Endothelial cell of umbilical vein (primary cell): ENCODE measurements at regions of chr9 and their contacts with region 1.

Region 1: DNA sequence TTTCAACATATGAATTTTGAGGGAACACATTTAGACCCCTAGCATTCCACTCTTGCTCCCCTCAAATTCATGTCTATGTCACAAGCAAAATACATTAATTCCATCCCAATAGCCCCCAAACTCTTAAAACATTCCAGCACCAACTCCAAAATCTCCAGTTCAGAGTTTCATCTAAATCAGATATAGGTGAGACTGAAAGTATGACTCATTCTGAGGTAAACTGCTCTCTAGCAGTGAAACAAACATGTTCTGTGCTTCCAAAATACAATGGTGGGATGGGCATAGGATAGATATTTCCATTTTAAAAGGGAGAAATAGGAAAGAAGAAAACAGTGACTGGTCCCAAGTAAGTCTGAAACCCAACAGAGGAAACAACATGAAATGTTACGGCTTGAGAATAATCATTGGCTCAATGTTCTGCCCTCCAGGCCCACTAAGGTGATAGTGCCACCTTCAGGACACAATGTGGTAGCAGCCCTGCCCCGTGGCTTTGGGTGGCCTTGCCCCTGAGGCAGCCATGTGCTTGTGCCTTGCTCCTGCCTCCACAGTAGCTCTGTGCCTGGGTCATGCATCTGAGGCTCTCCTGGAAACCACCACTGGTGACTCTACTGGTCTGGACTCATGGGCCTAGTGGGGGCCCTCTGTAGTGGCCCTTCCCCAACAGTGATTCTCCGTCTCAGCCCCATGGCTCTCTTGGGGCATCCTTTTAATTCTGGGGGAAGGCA is 36.4 kb upstream of the IPPK start:
- DNase-seq: peak; percentile 13
- H3K4me3 ChIP-seq: no peak overlapping the region
- H3K27ac ChIP-seq: no peak overlapping the region
- H3K4me1 ChIP-seq: peaks cover 12% of the 10 kb centered on the region
- H3K27me3 ChIP-seq: no peaks in the 10 kb centered on the region
- CTCF ChIP-seq: peak; percentile 42 to 52
- POLR2A ChIP-seq: no peak

Region 2: GRCh38 chr9:92293452-92294296 is 412.7 kb before region 1 on chr9 and contains the start of gene IARS1:
- CTCF ChIA-PET with region 1: no interaction called
- POLR2A ChIA-PET with region 1: no interaction called
- dilution Hi-C with region 1: no loop called
- intact Hi-C with region 1: loop called (anchors 10 kb)
- DNase-seq: peak; percentile 99
- H3K4me3 ChIP-seq: peak within 1 kb of the TSS; percentile 76 to 98 (median 78)
- H3K27ac ChIP-seq: peak within 1 kb of the TSS; percentile 64
- H3K4me1 ChIP-seq: peaks cover 23% of the 10 kb centered on the region
- H3K27me3 ChIP-seq: no peaks in the 10 kb centered on the region
- CTCF ChIP-seq: peak in 1 of 2 donors; percentile 40
- POLR2A ChIP-seq: peak; percentile 97
- total RNA-seq, gene IARS1: 130 and 132 TPM in 2 replicates

Region 3: DNA sequence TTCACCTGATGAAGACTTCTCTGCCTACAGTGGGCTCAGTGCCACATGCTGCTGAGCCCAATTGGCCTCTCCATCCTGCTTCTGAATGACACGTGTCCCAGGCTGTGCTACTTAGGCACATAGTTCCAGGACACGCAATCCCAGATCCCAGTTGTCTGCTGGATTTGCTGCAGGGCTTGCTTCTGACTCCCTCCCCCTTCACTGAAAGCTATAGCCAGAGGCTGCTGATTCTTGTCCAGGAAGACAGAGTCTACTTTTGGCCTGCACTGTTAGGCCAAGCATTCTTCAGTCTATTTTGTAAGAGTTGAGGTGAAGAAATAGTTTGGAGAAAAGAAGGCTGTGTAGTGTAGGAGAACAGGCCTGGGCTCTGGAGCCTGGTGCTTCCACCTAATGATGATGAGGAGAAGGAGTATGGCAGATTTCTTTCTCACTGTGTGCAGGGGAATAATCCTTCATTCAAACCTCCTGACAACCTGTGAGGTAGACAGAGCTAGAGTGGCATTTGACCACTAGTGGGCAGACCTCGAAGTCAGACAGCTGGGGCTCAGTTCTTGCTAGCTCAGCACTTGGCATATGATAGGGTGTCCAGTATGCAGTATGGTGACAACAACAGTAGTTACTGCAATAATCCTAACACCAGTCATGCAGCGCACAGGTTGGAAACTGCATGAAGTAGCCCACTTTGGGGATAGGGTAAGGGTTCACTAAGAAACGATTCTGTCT is 204.5 kb before region 1 on chr9:
- CTCF ChIA-PET with region 1: no interaction called
- POLR2A ChIA-PET with region 1: no interaction called
- dilution Hi-C with region 1: no loop called
- intact Hi-C with region 1: loop called (anchors 1 kb)
- DNase-seq: peak; percentile 45
- H3K4me3 ChIP-seq: no peak overlapping the region
- H3K27ac ChIP-seq: no peak overlapping the region
- H3K4me1 ChIP-seq: no peaks in the 10 kb centered on the region
- H3K27me3 ChIP-seq: no peaks in the 10 kb centered on the region
- CTCF ChIP-seq: peak; percentile 64 to 69
- POLR2A ChIP-seq: no peak

Region 4: DNA sequence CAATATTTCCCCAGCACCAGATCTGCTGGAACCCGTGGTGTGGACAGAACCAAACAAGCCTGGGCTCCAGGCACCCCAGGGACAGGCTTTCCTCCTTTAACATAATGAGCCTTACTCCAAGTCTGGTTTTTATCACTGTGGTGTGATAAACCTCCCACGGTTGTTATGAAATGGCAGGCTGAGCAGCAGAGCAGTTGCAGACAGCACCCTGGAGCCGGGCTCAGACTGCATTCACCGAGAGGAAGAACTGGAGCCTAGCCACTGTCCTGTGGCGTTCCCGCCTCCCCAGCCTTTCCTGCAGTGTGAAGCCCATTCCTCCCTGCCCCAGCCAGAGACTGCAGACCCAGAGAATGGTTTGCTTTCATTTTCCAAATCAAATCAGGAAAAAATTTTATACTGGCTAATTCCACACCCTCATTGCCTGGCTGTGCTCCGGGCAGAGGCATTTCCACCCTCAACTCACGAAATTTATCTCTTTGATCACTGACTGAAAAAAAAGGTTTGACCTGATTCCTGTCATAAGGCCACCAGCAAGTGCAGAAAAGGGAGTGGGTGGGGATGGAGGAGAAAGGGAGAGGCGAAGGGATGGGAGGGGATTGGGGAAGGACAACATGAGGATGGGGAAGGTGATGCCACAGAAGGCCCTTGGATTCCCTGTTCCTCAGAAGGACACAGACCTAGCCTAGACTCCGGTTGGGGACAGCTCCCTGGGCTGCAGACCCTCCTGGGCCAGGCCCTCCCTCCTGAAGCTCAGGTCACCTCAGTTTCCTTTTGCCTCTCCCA is 55.3 kb before region 1 on chr9:
- CTCF ChIA-PET with region 1: no interaction called
- POLR2A ChIA-PET with region 1: no interaction called
- dilution Hi-C with region 1: no loop called
- intact Hi-C with region 1: loop called (anchors 5 kb)
- DNase-seq: no peak
- H3K4me3 ChIP-seq: no peak overlapping the region
- H3K27ac ChIP-seq: no peak overlapping the region
- H3K4me1 ChIP-seq: peaks cover 8% of the 10 kb centered on the region
- H3K27me3 ChIP-seq: no peaks in the 10 kb centered on the region
- CTCF ChIP-seq: no peak
- POLR2A ChIP-seq: no peak